ENCODE measurements at regions of chr16 and their contacts with region 1.

Region 1: GRCh38 chr16:76897816-76898215 is 293.2 kb upstream of the MON1B start:
- DNase-seq: no peak
- H3K4me3 ChIP-seq: no peak overlapping the region
- H3K27ac ChIP-seq: no peak overlapping the region
- H3K4me1 ChIP-seq: peaks cover 4% of the 10 kb centered on the region in 2 donors
- H3K27me3 ChIP-seq: no peaks in the 10 kb centered on the region
- CTCF ChIP-seq: no peak
- POLR2A ChIP-seq: no peak

Region 2: DNA sequence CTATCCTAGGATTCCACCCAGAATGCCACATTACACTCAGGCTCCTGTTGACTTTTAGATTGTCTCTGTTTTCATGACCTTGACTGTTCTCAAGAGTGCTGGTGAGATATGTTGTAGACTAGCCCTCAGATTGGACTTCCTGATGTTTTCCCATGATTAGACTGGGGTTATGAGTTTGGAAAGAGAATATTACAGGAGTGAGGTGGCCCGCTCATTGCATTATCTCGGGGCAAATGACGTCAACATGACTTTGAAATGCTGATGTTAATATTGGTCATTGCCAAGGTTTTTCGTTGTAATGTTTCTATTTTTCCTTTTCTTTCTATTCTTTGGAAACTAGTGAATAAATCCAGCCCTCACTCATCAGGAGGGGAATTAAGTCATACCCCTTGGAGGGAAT is 62.5 kb before region 1 on chr16:
- intact Hi-C with region 1: loop called in 1 of 2 experiments (anchors 10 kb)
- DNase-seq: no peak
- H3K4me3 ChIP-seq: no peak overlapping the region
- H3K27ac ChIP-seq: no peak overlapping the region
- H3K4me1 ChIP-seq: no peaks in the 10 kb centered on the region
- H3K27me3 ChIP-seq: no peaks in the 10 kb centered on the region
- CTCF ChIP-seq: no peak
- POLR2A ChIP-seq: no peak

Measured in adrenal gland (tissue), 19 donors.